PC-3 (cell line): ENCODE measurements at regions of chr18 and their contacts with region 1.

Region 1: GRCh38 chr18:74896390-74896991 is 298.8 kb downstream of the ZNF407 start:
- DNase-seq: peak; percentile 73
- ATAC-seq: peak; percentile 72
- H3K4me3 ChIP-seq: no peak overlapping the region
- H3K27ac ChIP-seq: no peak overlapping the region
- H3K4me1 ChIP-seq: peaks cover 30% of the 10 kb centered on the region
- H3K27me3 ChIP-seq: no peaks in the 10 kb centered on the region
- CTCF ChIP-seq: peak; percentile 89

Region 2: DNA sequence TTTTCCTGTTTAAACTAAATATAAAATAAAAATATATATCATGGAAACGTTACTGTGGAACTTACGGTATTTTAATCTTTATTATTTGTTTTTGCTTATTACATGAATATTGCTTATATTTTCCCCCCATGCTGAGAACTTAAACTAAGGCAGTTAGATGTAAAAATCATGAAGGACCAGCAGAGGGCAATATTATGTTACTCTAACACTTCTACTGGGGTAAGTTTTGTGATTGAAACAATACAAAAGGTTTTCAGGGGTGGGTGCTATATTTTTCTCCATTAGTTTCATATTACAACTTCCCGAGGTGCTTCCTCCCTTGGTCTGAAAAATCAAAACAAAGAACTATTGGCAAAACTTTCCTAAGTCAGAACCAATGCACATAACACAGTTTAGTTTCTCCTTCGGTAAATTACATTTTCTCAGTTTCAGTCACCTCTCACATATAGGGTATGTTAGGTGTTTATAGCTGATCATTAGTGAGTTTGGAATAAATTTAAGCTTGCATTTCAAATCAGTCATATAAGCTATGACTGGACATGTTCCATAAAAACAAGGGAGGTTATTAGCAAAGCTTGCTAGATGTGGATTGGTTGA is 244.0 kb before region 1 on chr18:
- CTCF ChIA-PET with region 1: no interaction called
- POLR2A ChIA-PET with region 1: no interaction called
- intact Hi-C with region 1: loop called (anchors 1 kb)
- DNase-seq: peak; percentile 69
- ATAC-seq: peak; percentile 59
- H3K4me3 ChIP-seq: no peak overlapping the region
- H3K27ac ChIP-seq: no peak overlapping the region
- H3K4me1 ChIP-seq: no peaks in the 10 kb centered on the region
- H3K27me3 ChIP-seq: no peaks in the 10 kb centered on the region
- CTCF ChIP-seq: peak; percentile 71

Region 3: GRCh38 chr18:74806700-74807416 is 89.6 kb before region 1 on chr18:
- CTCF ChIA-PET with region 1: no interaction called
- POLR2A ChIA-PET with region 1: no interaction called
- intact Hi-C with region 1: loop called (anchors 5 kb)
- DNase-seq: peak; percentile 97
- ATAC-seq: peak; percentile 99
- H3K4me3 ChIP-seq: peak overlapping the region; percentile 36
- H3K27ac ChIP-seq: peak overlapping the region; percentile 92
- H3K4me1 ChIP-seq: peaks cover 26% of the 10 kb centered on the region
- H3K27me3 ChIP-seq: no peaks in the 10 kb centered on the region
- CTCF ChIP-seq: no peak

Region 4: DNA sequence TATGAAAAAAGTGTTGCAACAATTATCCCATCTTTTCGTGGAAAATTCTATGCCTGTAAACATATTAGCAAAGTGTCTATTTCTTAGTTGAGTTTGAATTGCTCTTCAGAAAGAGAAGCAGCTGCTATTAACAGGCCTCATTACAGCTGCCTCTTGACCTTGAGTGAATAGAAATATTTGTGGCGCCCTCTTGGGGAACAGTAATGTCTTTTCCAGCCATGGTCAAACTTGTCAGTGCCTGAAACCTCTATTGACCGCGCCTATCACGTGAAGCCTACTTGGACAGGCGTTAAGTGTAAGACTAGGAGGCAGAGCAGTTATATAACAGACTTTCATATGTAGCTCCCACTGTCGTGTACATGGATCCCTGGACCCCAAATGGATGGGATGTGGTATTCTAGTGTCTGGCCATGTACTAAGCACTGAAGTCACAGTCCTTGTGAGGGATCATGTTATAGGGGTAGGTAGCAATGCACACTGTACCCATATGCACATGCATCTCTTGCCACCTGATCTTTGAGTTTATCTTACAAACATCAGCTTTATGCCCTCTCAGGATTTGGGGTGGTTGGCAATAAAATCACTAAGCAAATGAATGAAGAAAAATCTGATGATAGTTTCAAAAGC is 67.4 kb after region 1 on chr18:
- CTCF ChIA-PET with region 1: interaction called, 21 read pairs
- POLR2A ChIA-PET with region 1: interaction called, 3 read pairs
- intact Hi-C with region 1: loop called (anchors 1 kb)
- DNase-seq: peak; percentile 63
- ATAC-seq: peak; percentile 97
- H3K4me3 ChIP-seq: no peak overlapping the region
- H3K27ac ChIP-seq: no peak overlapping the region
- H3K4me1 ChIP-seq: no peaks in the 10 kb centered on the region
- H3K27me3 ChIP-seq: no peaks in the 10 kb centered on the region
- CTCF ChIP-seq: peak; percentile 77

Region 5: GRCh38 chr18:75070625-75071483 is 174.4 kb after region 1 on chr18:
- CTCF ChIA-PET with region 1: no interaction called
- POLR2A ChIA-PET with region 1: no interaction called
- intact Hi-C with region 1: loop called (anchors 2 kb)
- DNase-seq: peak; percentile 95
- ATAC-seq: peak; percentile 91
- H3K4me3 ChIP-seq: peak overlapping the region; percentile 62
- H3K27ac ChIP-seq: peak overlapping the region; percentile 87
- H3K4me1 ChIP-seq: peaks cover 26% of the 10 kb centered on the region
- H3K27me3 ChIP-seq: no peaks in the 10 kb centered on the region
- CTCF ChIP-seq: no peak

Region 6: GRCh38 chr18:75202696-75203365 is 306.3 kb after region 1 on chr18:
- CTCF ChIA-PET with region 1: interaction called, 10 read pairs
- POLR2A ChIA-PET with region 1: no interaction called
- intact Hi-C with region 1: no loop called
- DNase-seq: no peak
- ATAC-seq: no peak
- H3K4me3 ChIP-seq: no peak overlapping the region
- H3K27ac ChIP-seq: no peak overlapping the region
- H3K4me1 ChIP-seq: peaks cover 19% of the 10 kb centered on the region
- H3K27me3 ChIP-seq: no peaks in the 10 kb centered on the region
- CTCF ChIP-seq: no peak

Region 7: GRCh38 chr18:75478996-75479880 is 582.7 kb after region 1 on chr18:
- CTCF ChIA-PET with region 1: interaction called, 3 read pairs
- POLR2A ChIA-PET with region 1: no interaction called
- intact Hi-C with region 1: loop called (anchors 5 kb)
- DNase-seq: peak; percentile 73
- ATAC-seq: peak; percentile 87
- H3K4me3 ChIP-seq: no peak overlapping the region
- H3K27ac ChIP-seq: no peak overlapping the region
- H3K4me1 ChIP-seq: peaks cover 11% of the 10 kb centered on the region
- H3K27me3 ChIP-seq: no peaks in the 10 kb centered on the region
- CTCF ChIP-seq: peak; percentile 89